ENCODE measurements at regions of chr2 and their contacts with region 1.

Region 1: GRCh38 chr2:181104512-181105115 is 124.2 kb downstream of the UBE2E3 start:
- DNase-seq: peak in 4 of 9 experiments; percentile 26 to 83 (median 50)
- ATAC-seq: peak; percentile 44
- H3K4me3 ChIP-seq: no peak overlapping the region
- H3K4me3 Mint-ChIP-seq: no peak overlapping the region
- H3K27ac ChIP-seq: peak overlapping the region in 1 of 2 experiments; percentile 23
- H3K27ac Mint-ChIP-seq: peak overlapping the region; percentile 2
- H3K4me1 ChIP-seq: peaks cover 33% of the 10 kb centered on the region
- H3K4me1 Mint-ChIP-seq: peaks cover 42% of the 10 kb centered on the region
- H3K27me3 ChIP-seq: no peaks in the 10 kb centered on the region
- H3K27me3 Mint-ChIP-seq: no peaks in the 10 kb centered on the region
- CTCF ChIP-seq: peak; percentile 81

Region 2: DNA sequence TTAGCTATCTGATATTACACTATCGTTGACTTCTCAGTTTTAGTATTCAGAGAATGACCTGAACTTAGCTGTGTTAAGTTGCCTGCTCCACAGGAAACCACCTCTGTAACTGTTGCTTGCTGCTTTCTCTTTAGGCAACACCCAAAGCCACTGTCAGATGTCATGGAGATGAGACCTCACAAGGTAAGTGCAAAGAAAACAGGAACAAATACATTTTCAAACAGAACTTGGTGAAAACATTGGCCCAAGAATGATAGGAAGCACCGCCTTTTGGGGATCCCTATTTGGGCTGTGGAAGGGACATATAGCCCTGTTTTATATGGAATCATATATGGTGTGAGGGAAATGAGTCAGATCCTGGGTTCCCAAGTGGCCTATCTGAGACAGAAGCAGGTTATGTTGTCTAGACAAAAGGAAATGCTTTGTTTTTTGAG is 19.2 kb after region 1 on chr2:
- CTCF ChIA-PET with region 1: interaction called, 13 read pairs
- POLR2A ChIA-PET with region 1: interaction called, 4 read pairs
- intact Hi-C with region 1: loop called in 1 of 2 experiments (anchors 1 kb)
- DNase-seq: peak; percentile 25 to 94 (median 60)
- ATAC-seq: peak; percentile 93
- H3K4me3 ChIP-seq: peak overlapping the region; percentile 31 to 42
- H3K4me3 Mint-ChIP-seq: peak overlapping the region; percentile 81
- H3K27ac ChIP-seq: peak overlapping the region; percentile 84 to 96
- H3K27ac Mint-ChIP-seq: peak overlapping the region; percentile 99
- H3K4me1 ChIP-seq: peaks cover 66% of the 10 kb centered on the region
- H3K4me1 Mint-ChIP-seq: peaks cover 74% of the 10 kb centered on the region
- H3K27me3 ChIP-seq: no peaks in the 10 kb centered on the region
- H3K27me3 Mint-ChIP-seq: no peaks in the 10 kb centered on the region
- CTCF ChIP-seq: no peak

Region 3: GRCh38 chr2:181178823-181179412 is 74.3 kb after region 1 on chr2:
- CTCF ChIA-PET with region 1: interaction called, 4 read pairs
- POLR2A ChIA-PET with region 1: no interaction called
- intact Hi-C with region 1: loop called in 1 of 2 experiments (anchors 2 kb)
- DNase-seq: peak in 5 of 9 experiments; percentile 34 to 73 (median 39)
- ATAC-seq: peak; percentile 79
- H3K4me3 ChIP-seq: no peak overlapping the region
- H3K4me3 Mint-ChIP-seq: no peak overlapping the region
- H3K27ac ChIP-seq: peak overlapping the region in 1 of 2 experiments; percentile 34
- H3K27ac Mint-ChIP-seq: peak overlapping the region; percentile 47
- H3K4me1 ChIP-seq: peaks cover 16% of the 10 kb centered on the region
- H3K4me1 Mint-ChIP-seq: peaks cover 54% of the 10 kb centered on the region
- H3K27me3 ChIP-seq: no peaks in the 10 kb centered on the region
- H3K27me3 Mint-ChIP-seq: no peaks in the 10 kb centered on the region
- CTCF ChIP-seq: peak; percentile 64

Region 4: GRCh38 chr2:181275643-181276070 is 171.0 kb after region 1 on chr2:
- CTCF ChIA-PET with region 1: interaction called, 5 read pairs
- POLR2A ChIA-PET with region 1: interaction called, 3 read pairs
- intact Hi-C with region 1: loop called (anchors 5 kb)
- DNase-seq: peak in 5 of 9 experiments; percentile 18 to 78 (median 59)
- ATAC-seq: peak; percentile 90
- H3K4me3 ChIP-seq: no peak overlapping the region
- H3K4me3 Mint-ChIP-seq: peak overlapping the region; percentile 35
- H3K27ac ChIP-seq: peak overlapping the region; percentile 17 to 68
- H3K27ac Mint-ChIP-seq: peak overlapping the region; percentile 79
- H3K4me1 ChIP-seq: peaks cover 31% of the 10 kb centered on the region
- H3K4me1 Mint-ChIP-seq: peaks cover 46% of the 10 kb centered on the region
- H3K27me3 ChIP-seq: no peaks in the 10 kb centered on the region
- H3K27me3 Mint-ChIP-seq: no peaks in the 10 kb centered on the region
- CTCF ChIP-seq: no peak

Region 5: DNA sequence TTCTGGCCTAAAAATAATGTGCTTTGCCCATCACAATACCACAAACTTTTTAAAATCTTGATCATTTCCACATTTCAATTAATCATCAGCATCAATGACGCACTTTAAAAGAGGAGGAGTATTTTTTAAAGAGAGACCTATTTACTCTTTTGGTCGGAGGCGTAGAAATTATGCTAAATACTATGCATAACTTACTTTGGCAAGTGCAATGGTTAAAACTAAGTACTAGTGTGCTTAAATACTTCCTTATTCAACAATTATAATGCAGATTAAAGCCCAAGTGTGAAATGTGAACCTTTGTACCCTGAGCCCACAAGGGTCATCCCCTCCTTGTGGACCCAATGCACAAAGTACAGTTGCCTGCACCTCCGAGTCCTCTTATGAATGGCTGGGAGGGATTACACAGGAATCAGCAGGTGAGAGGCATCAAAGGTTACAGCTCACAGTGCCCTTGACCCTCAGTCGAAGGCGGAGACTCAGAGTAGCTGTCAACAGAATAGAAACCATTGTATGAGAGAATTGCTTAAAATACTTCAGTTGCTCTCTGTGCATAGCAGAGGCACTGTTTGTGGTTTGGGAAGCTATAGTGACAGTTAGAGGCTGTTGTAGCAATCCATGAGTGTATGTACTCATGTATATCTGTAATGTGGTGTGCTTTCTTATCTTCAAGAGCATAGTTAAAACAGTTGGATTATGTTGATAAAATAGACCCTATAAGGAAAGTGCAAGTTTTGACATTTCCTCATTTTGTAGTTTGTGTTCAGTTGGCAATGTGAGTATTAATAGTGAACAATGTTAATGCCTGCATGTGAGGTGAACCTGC is 200.9 kb after region 1 on chr2:
- CTCF ChIA-PET with region 1: interaction called, 10 read pairs
- POLR2A ChIA-PET with region 1: interaction called, 3 read pairs
- intact Hi-C with region 1: loop called in 1 of 2 experiments (anchors 2 kb)
- DNase-seq: peak in 7 of 9 experiments; percentile 31 to 76 (median 54)
- ATAC-seq: peak; percentile 67
- H3K4me3 ChIP-seq: no peak overlapping the region
- H3K4me3 Mint-ChIP-seq: peak overlapping the region; percentile 71
- H3K27ac ChIP-seq: peak overlapping the region; percentile 79
- H3K27ac Mint-ChIP-seq: peak overlapping the region; percentile 96
- H3K4me1 ChIP-seq: peaks cover 78% of the 10 kb centered on the region
- H3K4me1 Mint-ChIP-seq: peaks cover 80% of the 10 kb centered on the region
- H3K27me3 ChIP-seq: no peaks in the 10 kb centered on the region
- H3K27me3 Mint-ChIP-seq: no peaks in the 10 kb centered on the region
- CTCF ChIP-seq: no peak

Region 6: DNA sequence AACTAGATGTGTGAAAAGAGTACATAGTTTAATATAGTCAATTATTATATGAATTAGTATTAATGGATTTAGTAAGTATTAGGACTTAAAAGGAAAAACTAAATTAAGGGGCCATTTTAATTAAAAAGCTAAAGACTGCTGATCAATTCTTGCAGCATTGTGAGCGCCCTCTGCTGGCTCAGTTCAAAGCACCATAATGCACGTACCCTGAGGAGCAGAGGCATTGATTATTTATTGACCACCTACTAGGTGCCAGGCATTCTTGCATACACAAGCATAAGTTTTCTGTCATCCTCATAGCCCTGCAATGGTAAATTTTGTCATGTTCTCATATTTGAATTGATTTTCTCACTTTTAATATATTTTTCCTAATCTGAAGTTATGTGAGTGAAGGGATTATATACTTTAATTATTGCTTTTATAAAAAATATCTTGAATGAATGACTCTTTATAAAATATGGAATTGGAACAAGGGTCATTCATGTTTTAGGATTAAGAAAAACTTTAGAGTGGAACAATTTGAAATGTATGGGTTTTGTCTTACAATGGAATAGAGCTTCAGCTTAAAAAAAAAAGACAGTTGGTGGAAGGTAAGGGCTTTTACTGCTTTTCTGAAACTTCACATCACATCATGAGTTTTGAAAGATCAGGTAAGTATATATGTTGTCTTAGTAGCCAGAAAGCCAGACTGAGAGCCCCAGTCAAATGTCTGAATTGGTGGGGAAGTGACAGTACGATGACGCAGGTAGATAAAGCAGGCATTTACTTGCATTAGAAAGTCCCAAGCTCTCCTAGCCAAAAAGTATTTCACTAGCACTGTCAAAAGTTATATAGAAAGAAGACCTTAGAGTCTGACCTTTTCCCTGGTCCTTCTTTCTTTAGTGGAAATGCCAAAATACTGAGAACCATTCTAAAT is 362.3 kb after region 1 on chr2:
- CTCF ChIA-PET with region 1: interaction called, 32 read pairs
- POLR2A ChIA-PET with region 1: interaction called, 3 read pairs
- intact Hi-C with region 1: loop called in 1 of 2 experiments (anchors 1 kb)
- DNase-seq: peak; percentile 56 to 88 (median 80)
- ATAC-seq: peak; percentile 52
- H3K4me3 ChIP-seq: no peak overlapping the region
- H3K4me3 Mint-ChIP-seq: peak overlapping the region; percentile 66
- H3K27ac ChIP-seq: peak overlapping the region; percentile 12 to 85
- H3K27ac Mint-ChIP-seq: peak overlapping the region; percentile 93
- H3K4me1 ChIP-seq: peaks cover 76% of the 10 kb centered on the region
- H3K4me1 Mint-ChIP-seq: peaks cover 86% of the 10 kb centered on the region
- H3K27me3 ChIP-seq: no peaks in the 10 kb centered on the region
- H3K27me3 Mint-ChIP-seq: no peaks in the 10 kb centered on the region
- CTCF ChIP-seq: peak; percentile 75

Measured in CD8-positive, alpha-beta T cell (primary cell).